ENCODE measurements at regions of chr17 and their contacts with region 1.

Region 1: DNA sequence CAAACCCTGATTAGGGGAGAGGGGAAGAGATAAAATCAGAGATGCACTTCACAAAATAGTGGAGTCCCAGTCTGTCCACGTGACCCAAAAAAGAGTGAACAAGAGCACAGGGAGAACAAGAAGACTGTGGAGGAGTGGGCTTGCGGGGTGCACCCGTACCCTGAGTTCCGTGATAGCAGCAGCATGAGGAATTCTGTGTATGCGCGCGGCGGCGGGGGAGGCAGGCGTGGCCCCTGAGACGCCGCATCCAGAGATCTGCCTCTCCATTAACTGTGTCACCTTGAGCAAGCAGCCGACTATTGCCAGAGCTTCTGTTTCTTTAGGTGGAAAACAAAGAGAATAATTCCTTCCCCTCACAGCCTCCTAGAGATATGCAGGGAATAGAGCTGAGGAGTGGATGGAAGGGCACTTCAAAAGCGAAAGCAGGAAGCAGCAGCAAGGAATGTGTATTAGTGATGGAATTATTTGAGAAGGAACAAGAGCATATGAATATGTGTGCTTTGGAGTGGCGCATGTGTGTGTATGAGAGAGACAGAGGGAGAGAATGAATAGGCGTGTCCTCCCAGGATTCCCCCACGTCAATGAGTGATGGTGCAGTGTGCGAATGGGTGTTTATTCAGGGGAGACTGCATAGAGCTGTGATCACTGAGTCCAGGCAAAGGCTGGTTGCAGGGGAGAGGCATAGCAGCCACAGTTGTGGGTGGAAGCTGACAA is 10.4 kb upstream of the SOX9 start:
- DNase-seq: no peak
- H3K4me3 ChIP-seq: no peak overlapping the region
- H3K27ac ChIP-seq: no peak overlapping the region
- H3K4me1 ChIP-seq: no peaks in the 10 kb centered on the region
- CTCF ChIP-seq: no peak

Region 2: DNA sequence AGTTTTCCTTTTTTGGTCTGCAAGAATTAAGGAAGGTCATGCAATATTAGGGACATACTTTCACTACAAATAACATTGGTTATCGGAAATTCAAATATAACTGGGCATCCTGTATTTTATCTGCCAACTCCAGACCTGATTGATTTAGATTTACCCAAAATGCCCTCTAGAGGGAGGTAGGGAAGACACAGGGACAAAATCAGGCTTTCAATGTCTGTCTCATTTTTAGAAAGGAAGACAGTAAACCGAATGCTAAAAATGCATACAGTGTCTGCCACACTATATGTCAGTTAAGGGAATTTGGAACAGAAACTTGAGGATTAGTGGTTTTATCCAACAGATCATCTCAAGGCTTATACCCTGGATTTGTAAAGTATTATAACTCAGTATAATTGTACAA is 151.2 kb before region 1 on chr17:
- CTCF ChIA-PET with region 1: no interaction called
- POLR2A ChIA-PET with region 1: no interaction called
- intact Hi-C with region 1: loop called (anchors 5 kb)
- DNase-seq: peak; percentile 25
- H3K4me3 ChIP-seq: no peak overlapping the region
- H3K27ac ChIP-seq: no peak overlapping the region
- H3K4me1 ChIP-seq: no peaks in the 10 kb centered on the region
- CTCF ChIP-seq: peak; percentile 81

Region 3: GRCh38 chr17:72270273-72270950 is 160.0 kb after region 1 on chr17:
- CTCF ChIA-PET with region 1: interaction called, 11 read pairs
- POLR2A ChIA-PET with region 1: no interaction called
- intact Hi-C with region 1: no loop called
- DNase-seq: no peak
- H3K4me3 ChIP-seq: no peak overlapping the region
- H3K27ac ChIP-seq: no peak overlapping the region
- H3K4me1 ChIP-seq: no peaks in the 10 kb centered on the region
- CTCF ChIP-seq: no peak